ENCODE measurements at regions of chr1 and their contacts with region 1.

Region 1: DNA sequence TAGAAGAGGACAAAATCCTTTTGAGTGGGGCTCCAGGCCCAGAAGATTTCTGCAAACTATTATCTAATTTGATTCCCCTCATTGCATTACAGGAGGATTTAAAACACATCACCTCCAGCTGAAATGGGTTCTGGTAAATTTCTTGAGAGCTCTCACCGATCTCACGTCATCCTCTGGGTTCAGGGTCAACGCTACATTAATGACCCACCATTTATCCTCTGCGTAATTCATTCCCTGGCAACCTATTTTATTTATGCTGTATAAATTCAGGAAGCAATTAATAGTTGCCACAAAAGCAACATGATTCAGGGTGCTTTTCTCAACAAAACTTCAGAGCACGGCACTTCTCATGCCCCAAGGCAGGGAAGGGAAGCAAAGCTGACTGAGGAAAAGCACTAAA is 38.9 kb downstream of the LMX1A start:
- DNase-seq: no peak
- H3K4me3 ChIP-seq: no peak overlapping the region
- H3K27ac ChIP-seq: no peak overlapping the region
- H3K4me1 ChIP-seq: no peaks in the 10 kb centered on the region
- H3K27me3 ChIP-seq: peaks cover 0 to 11% of the 10 kb centered on the region in 2 donors
- CTCF ChIP-seq: no peak

Region 2: DNA sequence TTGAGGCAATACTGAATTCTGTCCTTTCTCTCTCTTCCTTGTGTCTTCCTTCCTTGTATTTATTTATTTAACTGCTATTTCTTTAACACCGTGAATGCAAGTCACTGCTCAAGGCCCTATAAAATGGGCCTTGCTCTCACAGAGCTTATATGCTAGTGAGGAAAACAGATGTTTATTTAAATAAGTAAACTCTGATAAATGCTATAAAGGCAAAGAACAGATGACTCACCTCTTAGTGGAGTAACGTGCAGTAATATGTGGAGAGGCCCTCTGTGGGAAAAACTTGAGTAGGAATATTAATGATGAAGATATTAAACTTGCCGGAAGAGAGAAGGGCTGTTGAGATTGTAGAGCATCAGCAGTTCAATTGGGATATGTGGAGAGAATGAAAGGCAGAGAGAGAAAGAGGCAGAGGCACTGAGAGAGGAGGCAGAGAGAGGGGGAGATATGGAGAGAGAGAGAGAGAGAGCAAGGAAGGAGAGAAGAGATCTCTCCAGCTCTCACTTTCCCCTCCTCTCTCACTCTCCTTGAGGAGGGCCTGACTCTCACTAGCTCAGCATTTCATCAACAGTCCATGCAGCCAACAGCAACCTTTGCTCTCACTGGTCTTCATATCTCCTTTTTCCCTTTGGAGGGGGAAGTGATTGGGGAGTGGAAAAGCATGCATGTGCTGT is 283.3 kb before region 1 on chr1:
- intact Hi-C with region 1: no loop called
- DNase-seq: no peak
- H3K4me3 ChIP-seq: no peak overlapping the region
- H3K27ac ChIP-seq: no peak overlapping the region
- H3K4me1 ChIP-seq: no peaks in the 10 kb centered on the region
- H3K27me3 ChIP-seq: no peaks in the 10 kb centered on the region
- CTCF ChIP-seq: no peak

Region 3: GRCh38 chr1:165284454-165284853 is 33.2 kb before region 1 on chr1:
- intact Hi-C with region 1: no loop called
- DNase-seq: no peak
- H3K4me3 ChIP-seq: no peak overlapping the region
- H3K27ac ChIP-seq: no peak overlapping the region
- H3K4me1 ChIP-seq: no peaks in the 10 kb centered on the region
- H3K27me3 ChIP-seq: peaks cover 0 to 50% of the 10 kb centered on the region in 2 donors
- CTCF ChIP-seq: no peak

Region 4: DNA sequence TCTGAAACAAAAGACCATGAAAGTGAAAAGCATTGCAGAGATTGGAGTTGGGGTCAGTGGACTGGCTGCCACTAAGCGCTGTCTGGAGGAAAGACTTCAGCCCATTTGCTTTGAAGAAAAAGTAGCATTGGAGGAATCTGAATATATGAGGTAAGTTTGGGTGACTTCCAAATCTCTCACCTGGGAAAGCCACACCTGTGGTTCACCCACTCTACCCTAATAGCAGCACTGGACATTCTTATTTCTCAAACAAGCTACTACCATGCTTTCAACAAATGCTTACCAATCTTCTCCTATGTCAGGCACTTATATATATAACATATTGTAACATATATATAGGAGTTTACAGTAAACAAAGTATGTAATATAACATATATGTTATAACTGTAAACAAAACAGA is 1445.7 kb after region 1 on chr1:
- intact Hi-C with region 1: loop called (anchors 5 kb)
- DNase-seq: no peak
- H3K4me3 ChIP-seq: no peak overlapping the region
- H3K27ac ChIP-seq: no peak overlapping the region
- H3K4me1 ChIP-seq: no peaks in the 10 kb centered on the region
- H3K27me3 ChIP-seq: no peaks in the 10 kb centered on the region
- CTCF ChIP-seq: no peak

Measured in tibial artery (tissue), 4 donors.